ENCODE measurements at regions of chr9 and their contacts with region 1.

Region 1: DNA sequence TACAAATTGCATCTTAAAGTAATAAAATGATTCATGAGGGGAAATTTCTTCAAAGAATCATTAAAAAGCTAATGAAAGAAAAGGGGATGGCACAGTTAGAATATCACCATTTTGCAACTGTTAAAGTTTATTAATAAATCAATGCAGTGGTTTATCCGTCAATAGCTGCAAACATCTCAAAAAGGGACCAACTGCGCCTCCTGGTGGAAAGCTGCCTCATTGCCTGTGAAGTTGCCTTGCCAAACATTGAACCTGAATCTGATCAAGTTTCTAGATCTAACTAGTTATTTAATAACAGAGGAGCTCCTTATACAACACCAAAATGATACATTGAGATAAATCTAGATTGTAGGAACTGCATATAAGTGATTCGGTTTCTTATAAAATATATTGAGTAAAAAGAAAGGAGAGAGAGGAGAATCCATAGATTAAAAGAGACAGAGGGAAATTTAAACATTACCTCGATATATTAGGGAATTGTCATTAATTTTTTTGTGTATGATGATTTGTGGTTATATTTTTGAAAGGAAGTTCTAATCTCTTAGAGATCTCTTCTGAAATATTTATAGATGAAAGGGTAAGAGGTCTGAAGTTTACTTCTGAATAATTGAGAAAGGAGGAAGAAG is 6.9 kb upstream of the NDUFB6 start:
- DNase-seq: peak; percentile 25
- H3K4me3 ChIP-seq: no peak overlapping the region
- H3K27ac ChIP-seq: no peak overlapping the region
- H3K4me1 ChIP-seq: no peaks in the 10 kb centered on the region
- H3K27me3 ChIP-seq: no peaks in the 10 kb centered on the region
- CTCF ChIP-seq: peak; percentile 93 to 96

Region 2: GRCh38 chr9:32378993-32379729 is 200.7 kb before region 1 on chr9:
- CTCF ChIA-PET with region 1: interaction called, 42 read pairs
- dilution Hi-C with region 1: no loop called
- in situ Hi-C with region 1: loop called (anchors 5 kb)
- intact Hi-C with region 1: loop called (anchors 1 kb)
- DNase-seq: peak; percentile 68
- H3K4me3 ChIP-seq: no peak overlapping the region
- H3K27ac ChIP-seq: no peak overlapping the region
- H3K4me1 ChIP-seq: peaks cover 7% of the 10 kb centered on the region
- H3K27me3 ChIP-seq: no peaks in the 10 kb centered on the region
- CTCF ChIP-seq: peak; percentile 82 to 85

Region 3: DNA sequence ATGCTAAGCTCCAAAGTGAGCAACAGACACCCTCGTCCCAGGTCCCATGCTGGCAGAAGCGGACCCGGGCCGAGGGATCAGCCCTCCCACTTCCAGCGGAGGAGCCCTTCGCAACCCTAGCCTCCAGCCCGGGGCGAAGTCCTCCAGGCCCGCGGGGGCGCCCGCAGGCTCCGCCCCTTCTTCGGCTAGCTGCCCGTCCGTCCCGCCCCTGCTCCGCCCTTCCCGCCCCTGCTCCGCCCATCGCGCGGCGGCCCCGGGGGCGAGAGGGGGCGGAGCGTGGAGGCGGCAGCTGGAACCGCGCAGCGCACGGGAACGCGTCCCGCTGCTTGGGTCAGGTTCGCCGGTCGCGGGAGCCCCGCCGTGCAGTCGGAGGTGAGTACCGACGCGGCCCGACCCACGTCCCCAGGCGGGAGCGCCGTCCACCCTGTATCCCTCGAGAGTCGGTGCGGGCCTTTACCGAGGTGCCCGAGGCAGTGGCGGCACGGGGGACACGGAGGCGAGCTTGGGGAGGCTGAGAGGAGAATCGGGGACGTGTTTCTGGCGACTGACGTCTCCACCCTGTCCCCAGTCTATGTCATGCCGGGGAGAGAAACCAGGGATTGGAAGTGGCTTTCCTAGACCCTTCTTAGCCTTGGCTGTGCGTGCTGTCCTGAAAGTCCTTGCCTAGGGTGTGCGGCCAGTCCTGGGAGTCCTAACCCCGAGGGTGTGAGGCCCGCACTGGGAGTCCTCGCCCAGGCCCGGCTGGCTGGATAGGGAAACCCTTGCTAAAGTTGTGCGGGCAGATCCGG is 195.3 kb before region 1 on chr9 and contains the start of gene ACO1:
- CTCF ChIA-PET with region 1: interaction called, 42 read pairs
- dilution Hi-C with region 1: no loop called
- in situ Hi-C with region 1: loop called (anchors 5 kb)
- intact Hi-C with region 1: no loop called
- DNase-seq: peak; percentile 83
- H3K4me3 ChIP-seq: peak within 1 kb of the TSS; percentile 79 to 98 (median 86)
- H3K27ac ChIP-seq: peak within 1 kb of the TSS; percentile 69
- H3K4me1 ChIP-seq: peaks cover 14% of the 10 kb centered on the region
- H3K27me3 ChIP-seq: no peaks in the 10 kb centered on the region
- CTCF ChIP-seq: no peak
- total RNA-seq, gene ACO1: 43.1 to 44.2 TPM

Region 4: GRCh38 chr9:32431940-32432555 is 147.8 kb before region 1 on chr9:
- CTCF ChIA-PET with region 1: no interaction called
- dilution Hi-C with region 1: no loop called
- in situ Hi-C with region 1: no loop called
- intact Hi-C with region 1: loop called (anchors 1 kb)
- DNase-seq: peak; percentile 4
- H3K4me3 ChIP-seq: no peak overlapping the region
- H3K27ac ChIP-seq: no peak overlapping the region
- H3K4me1 ChIP-seq: peaks cover 5% of the 10 kb centered on the region
- H3K27me3 ChIP-seq: no peaks in the 10 kb centered on the region
- CTCF ChIP-seq: peak; percentile 18 to 46

Region 5: DNA sequence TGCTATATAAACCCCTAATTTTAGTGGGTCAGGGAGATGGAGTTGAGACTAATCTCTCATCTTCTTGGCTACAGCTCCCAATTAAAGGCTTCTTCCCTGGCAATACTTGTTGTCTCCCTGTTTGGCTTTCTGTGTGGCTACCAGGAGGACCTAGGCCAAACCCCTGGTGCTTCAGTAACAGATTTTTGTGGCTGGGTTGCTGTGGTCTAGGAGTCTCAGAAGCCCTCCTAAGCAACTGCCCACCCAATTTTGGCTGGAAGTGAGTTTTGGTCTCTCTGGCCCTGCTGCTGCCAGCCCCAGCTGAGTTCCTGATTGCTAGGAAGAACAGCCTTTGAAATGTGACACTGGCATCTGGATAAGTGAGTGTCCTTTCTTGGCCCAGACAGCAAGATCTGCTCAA is 63.6 kb before region 1 on chr9:
- CTCF ChIA-PET with region 1: no interaction called
- dilution Hi-C with region 1: no loop called
- in situ Hi-C with region 1: no loop called
- intact Hi-C with region 1: no loop called
- DNase-seq: no peak
- H3K4me3 ChIP-seq: no peak overlapping the region
- H3K27ac ChIP-seq: no peak overlapping the region
- H3K4me1 ChIP-seq: no peaks in the 10 kb centered on the region
- H3K27me3 ChIP-seq: no peaks in the 10 kb centered on the region
- CTCF ChIP-seq: no peak

Measured in mammary epithelial cell (primary cell).